ENCODE measurements at regions of chr15 and their contacts with region 1.

Region 1: DNA sequence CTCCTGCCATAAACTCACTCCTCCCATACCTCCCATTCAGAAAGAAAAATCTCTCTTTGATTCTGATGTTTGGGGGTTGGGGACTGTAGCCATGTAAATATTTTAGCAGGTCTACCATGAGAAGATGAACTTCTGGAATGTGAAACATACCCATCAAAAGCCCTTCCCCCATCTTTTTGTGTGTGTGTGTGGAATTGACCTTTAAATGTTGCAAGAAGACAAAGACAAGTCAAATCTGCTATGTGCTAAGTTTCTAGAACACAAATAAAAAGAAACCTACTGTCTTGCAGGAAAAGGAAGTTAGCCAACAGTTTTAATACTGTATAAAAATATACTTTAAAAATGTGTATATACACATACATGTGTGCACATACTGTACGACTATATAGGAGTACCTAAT is 29.7 kb upstream of the USP50 start:
- DNase-seq: no peak
- H3K4me3 ChIP-seq: no peak overlapping the region
- H3K27ac ChIP-seq: no peak overlapping the region
- H3K4me1 ChIP-seq: no peaks in the 10 kb centered on the region
- H3K27me3 ChIP-seq: no peaks in the 10 kb centered on the region
- CTCF ChIP-seq: no peak
- POLR2A ChIP-seq: no peak

Region 2: DNA sequence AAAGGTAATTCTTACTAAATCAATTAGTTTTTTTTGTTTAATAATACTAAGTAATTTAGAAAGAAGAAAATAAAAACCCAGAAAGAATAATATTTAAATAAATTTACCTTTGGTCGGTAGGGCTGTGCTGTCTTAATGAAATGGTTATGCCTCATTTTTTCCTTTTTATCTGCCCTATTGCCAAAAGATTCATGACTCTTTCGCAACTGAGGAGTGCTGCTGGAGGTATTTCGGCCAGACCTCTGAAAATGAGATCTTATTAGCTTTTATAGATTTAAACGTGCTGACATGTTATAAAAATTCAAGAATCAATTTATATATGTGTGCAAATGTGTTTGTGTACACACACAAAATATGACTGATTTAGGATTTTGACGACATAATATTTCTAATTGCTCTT is 37.4 kb after region 1 on chr15:
- CTCF ChIA-PET with region 1: no interaction called
- POLR2A ChIA-PET with region 1: interaction called, 10 read pairs
- dilution Hi-C with region 1: no loop called
- intact Hi-C with region 1: no loop called
- DNase-seq: no peak
- H3K4me3 ChIP-seq: no peak overlapping the region
- H3K27ac ChIP-seq: no peak overlapping the region
- H3K4me1 ChIP-seq: no peaks in the 10 kb centered on the region
- H3K27me3 ChIP-seq: no peaks in the 10 kb centered on the region
- CTCF ChIP-seq: no peak
- POLR2A ChIP-seq: no peak